ENCODE measurements at regions of chr16 and their contacts with region 1.

Region 1: DNA sequence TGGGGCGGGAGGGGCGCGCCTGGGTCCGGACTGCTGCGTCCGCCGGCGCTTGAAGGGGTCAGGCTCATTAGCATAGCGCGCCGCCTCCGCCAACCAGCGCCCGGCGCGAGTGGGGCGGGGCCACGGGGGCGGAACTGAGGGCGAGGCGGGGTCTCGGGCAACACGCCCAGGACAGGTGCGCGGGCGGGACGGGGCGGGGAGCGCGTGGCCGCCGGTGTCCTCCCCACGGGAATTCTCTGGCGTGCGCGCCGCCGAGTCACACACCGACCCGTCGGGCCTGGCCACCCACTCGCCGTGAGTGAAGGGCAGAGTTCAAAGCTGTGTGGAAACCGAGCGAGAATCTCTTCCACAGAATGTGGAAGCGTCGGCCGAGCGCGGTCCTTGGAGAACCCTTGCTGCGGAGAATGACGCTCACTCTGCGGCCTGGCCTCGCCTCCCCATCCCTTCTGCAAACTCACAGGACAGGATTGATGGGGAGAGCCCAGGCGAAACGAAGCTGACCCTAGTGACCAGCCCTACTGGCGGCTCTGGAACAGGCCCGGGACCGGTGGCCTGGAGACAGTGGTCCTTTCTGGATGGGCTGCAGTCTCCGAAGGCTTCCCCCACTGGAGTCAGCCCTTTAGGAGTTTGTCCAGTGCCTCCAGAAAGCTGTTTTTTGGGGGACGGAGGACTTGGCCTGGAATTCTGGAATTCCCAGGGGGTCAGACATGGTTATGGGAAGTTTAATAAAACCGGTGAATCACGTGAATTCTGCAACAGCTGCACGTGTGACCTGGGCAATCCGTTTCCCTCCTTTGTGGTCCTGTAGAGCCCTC is at the start of gene SNAI3:
- DNase-seq: peak; percentile 74 to 84 (median 78)
- H3K4me3 ChIP-seq: peak within 1 kb of the TSS; percentile 82 to 90
- H3K4me3 Mint-ChIP-seq: peak within 1 kb of the TSS; percentile 81 to 89 (median 84)
- H3K27ac ChIP-seq: peak within 1 kb of the TSS; percentile 68
- H3K27ac Mint-ChIP-seq: peak within 1 kb of the TSS; percentile 25 to 96 (median 79)
- H3K4me1 ChIP-seq: peaks cover 68% of the 10 kb centered on the region
- H3K4me1 Mint-ChIP-seq: peaks cover 26 to 67% (median 49%) of the 10 kb centered on the region in 4 donors
- H3K27me3 ChIP-seq: no peaks in the 10 kb centered on the region
- H3K27me3 Mint-ChIP-seq: no peaks in the 10 kb centered on the region
- total RNA-seq, gene SNAI3: 14.0 to 15.7 TPM

Region 2: GRCh38 chr16:88639231-88640038 is 47.2 kb before region 1 on chr16:
- CTCF ChIA-PET with region 1: interaction called, 3 read pairs
- POLR2A ChIA-PET with region 1: interaction called, 3 read pairs
- intact Hi-C with region 1: loop called (anchors 5 kb)
- DNase-seq: no peak
- H3K4me3 ChIP-seq: no peak overlapping the region
- H3K4me3 Mint-ChIP-seq: peak overlapping the region in 2 of 8 donors; percentile 58 to 63
- H3K27ac ChIP-seq: no peak overlapping the region
- H3K27ac Mint-ChIP-seq: peak overlapping the region in 2 of 7 donors; percentile 84 to 92
- H3K4me1 ChIP-seq: peaks cover 50% of the 10 kb centered on the region
- H3K4me1 Mint-ChIP-seq: peaks cover 15 to 48% (median 32%) of the 10 kb centered on the region in 4 donors
- H3K27me3 ChIP-seq: peaks cover 11% of the 10 kb centered on the region
- H3K27me3 Mint-ChIP-seq: peaks cover 0 to 9% of the 10 kb centered on the region in 2 donors

Region 3: DNA sequence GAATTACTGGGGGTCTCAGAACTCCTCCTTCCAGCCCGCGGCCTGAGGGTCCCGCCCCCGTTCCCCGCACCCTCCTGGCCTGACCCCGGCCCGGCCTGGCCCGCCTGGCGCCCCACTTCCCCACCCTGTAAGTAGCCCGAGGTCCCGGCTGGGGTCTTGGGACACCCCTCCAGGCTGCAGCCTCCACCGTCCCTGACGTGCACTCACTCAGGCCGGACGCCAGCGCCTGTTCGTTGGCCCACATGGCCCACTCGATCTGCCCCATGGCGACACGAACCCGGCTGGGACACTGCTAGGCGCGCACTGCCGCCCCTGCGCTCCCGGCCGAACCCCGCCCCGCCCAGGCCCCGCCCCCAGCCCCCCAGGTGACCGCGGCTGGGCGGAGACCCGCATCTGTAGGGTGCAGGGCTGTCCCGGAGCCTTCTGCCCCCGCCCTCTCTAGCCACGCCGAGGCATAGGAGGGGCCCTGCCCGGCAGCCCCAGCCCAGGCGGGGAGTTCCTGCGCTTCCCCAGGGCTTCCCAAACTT is 35.8 kb before region 1 on chr16 and contains the start of gene CYBA:
- CTCF ChIA-PET with region 1: interaction called, 3 read pairs
- POLR2A ChIA-PET with region 1: interaction called, 5 read pairs
- intact Hi-C with region 1: loop called (anchors 1 kb)
- DNase-seq: peak; percentile 81 to 87 (median 84)
- H3K4me3 ChIP-seq: peak within 1 kb of the TSS; percentile 76 to 91
- H3K4me3 Mint-ChIP-seq: peak within 1 kb of the TSS; percentile 89 to 93 (median 91)
- H3K27ac ChIP-seq: peak within 1 kb of the TSS; percentile 91
- H3K27ac Mint-ChIP-seq: peak within 1 kb of the TSS; percentile 93 to 97 (median 95)
- H3K4me1 ChIP-seq: peaks cover 28% of the 10 kb centered on the region
- H3K4me1 Mint-ChIP-seq: peaks cover 7 to 26% (median 12%) of the 10 kb centered on the region in 4 donors
- H3K27me3 ChIP-seq: no peaks in the 10 kb centered on the region
- H3K27me3 Mint-ChIP-seq: no peaks in the 10 kb centered on the region
- total RNA-seq, gene CYBA: 383 to 386 TPM

Region 4: GRCh38 chr16:88662843-88663606 is 23.6 kb before region 1 on chr16 and contains the start of gene MVD:
- CTCF ChIA-PET with region 1: interaction called, 4 read pairs
- POLR2A ChIA-PET with region 1: interaction called, 17 read pairs
- intact Hi-C with region 1: loop called (anchors 1 kb)
- DNase-seq: peak; percentile 93 to 96 (median 95)
- H3K4me3 ChIP-seq: peak within 1 kb of the TSS; percentile 65 to 95
- H3K4me3 Mint-ChIP-seq: peak within 1 kb of the TSS; percentile 91 to 95 (median 94)
- H3K27ac ChIP-seq: peak within 1 kb of the TSS; percentile 83
- H3K27ac Mint-ChIP-seq: peak within 1 kb of the TSS; percentile 80 to 98 (median 97)
- H3K4me1 ChIP-seq: peaks cover 16% of the 10 kb centered on the region
- H3K4me1 Mint-ChIP-seq: peaks cover 11 to 22% (median 15%) of the 10 kb centered on the region in 4 donors
- H3K27me3 ChIP-seq: no peaks in the 10 kb centered on the region
- H3K27me3 Mint-ChIP-seq: no peaks in the 10 kb centered on the region
- total RNA-seq, gene MVD: 49.2 to 57.0 TPM

Region 5: GRCh38 chr16:88672776-88673175 is 13.9 kb before region 1 on chr16:
- CTCF ChIA-PET with region 1: interaction called, 10 read pairs
- POLR2A ChIA-PET with region 1: interaction called, 11 read pairs
- intact Hi-C with region 1: no loop called
- DNase-seq: no peak
- H3K4me3 ChIP-seq: no peak overlapping the region
- H3K4me3 Mint-ChIP-seq: no peak overlapping the region
- H3K27ac ChIP-seq: no peak overlapping the region
- H3K27ac Mint-ChIP-seq: no peak overlapping the region
- H3K4me1 ChIP-seq: no peaks in the 10 kb centered on the region
- H3K4me1 Mint-ChIP-seq: no peaks in the 10 kb centered on the region
- H3K27me3 ChIP-seq: no peaks in the 10 kb centered on the region
- H3K27me3 Mint-ChIP-seq: no peaks in the 10 kb centered on the region

Region 6: DNA sequence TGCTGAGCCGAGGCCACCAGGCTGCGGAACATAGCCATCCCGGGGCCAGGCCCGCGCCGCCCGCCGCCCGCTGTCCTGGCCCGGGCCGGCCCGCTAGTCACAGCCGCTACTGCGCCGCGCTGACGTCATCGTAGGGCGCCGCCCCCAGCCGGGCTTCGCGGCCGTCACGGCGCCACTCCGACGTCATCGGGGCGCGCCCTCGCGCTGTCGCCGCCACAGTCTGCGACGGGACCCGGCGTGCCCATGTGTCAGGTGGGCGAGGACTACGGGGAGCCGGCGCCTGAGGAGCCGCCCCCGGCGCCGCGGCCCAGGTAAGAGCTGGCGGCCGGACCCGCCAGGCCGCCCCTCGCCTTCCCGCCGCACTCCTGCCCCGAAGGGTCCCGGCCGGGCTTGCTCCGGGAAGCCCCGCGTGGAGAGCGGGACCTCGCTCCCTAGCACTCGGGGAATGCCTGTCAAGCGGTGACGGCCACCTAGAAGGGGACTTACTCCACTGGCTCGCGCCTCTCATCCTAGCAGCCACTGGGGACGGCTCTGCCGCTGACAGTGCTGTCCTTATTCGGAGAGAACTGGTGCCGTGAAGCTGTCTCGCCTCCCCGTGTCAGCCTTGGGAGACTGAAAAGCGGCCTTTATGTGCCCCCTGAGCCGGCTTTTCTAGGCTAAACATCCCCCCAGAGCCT is 19.8 kb after region 1 on chr16 and contains the starts of genes CTU2 and RNF166:
- CTCF ChIA-PET with region 1: interaction called, 21 read pairs
- POLR2A ChIA-PET with region 1: interaction called, 249 read pairs
- intact Hi-C with region 1: loop called (anchors 1 kb)
- DNase-seq: peak; percentile 90 to 94 (median 91)
- H3K4me3 ChIP-seq: peak within 1 kb of the TSS; percentile 95 to 98
- H3K4me3 Mint-ChIP-seq: peak within 1 kb of the TSS; percentile 93 to 96 (median 96)
- H3K27ac ChIP-seq: peak within 1 kb of the TSS; percentile 85
- H3K27ac Mint-ChIP-seq: peak within 1 kb of the TSS; percentile 97 to 99 (median 98)
- H3K4me1 ChIP-seq: peaks cover 50% of the 10 kb centered on the region
- H3K4me1 Mint-ChIP-seq: peaks cover 20 to 62% (median 39%) of the 10 kb centered on the region in 4 donors
- H3K27me3 ChIP-seq: no peaks in the 10 kb centered on the region
- H3K27me3 Mint-ChIP-seq: no peaks in the 10 kb centered on the region
- total RNA-seq, gene CTU2: 20.4 to 21.1 TPM
- total RNA-seq, gene RNF166: 129 to 137 TPM

Region 7: GRCh38 chr16:88719267-88719932 is 32.8 kb after region 1 on chr16:
- CTCF ChIA-PET with region 1: no interaction called
- POLR2A ChIA-PET with region 1: no interaction called
- intact Hi-C with region 1: no loop called
- DNase-seq: no peak
- H3K4me3 ChIP-seq: no peak overlapping the region
- H3K4me3 Mint-ChIP-seq: no peak overlapping the region
- H3K27ac ChIP-seq: no peak overlapping the region
- H3K27ac Mint-ChIP-seq: peak overlapping the region in 1 of 7 donors; percentile 55
- H3K4me1 ChIP-seq: no peaks in the 10 kb centered on the region
- H3K4me1 Mint-ChIP-seq: peaks cover 0 to 4% (median 0%) of the 10 kb centered on the region in 4 donors
- H3K27me3 ChIP-seq: no peaks in the 10 kb centered on the region
- H3K27me3 Mint-ChIP-seq: no peaks in the 10 kb centered on the region

Region 8: DNA sequence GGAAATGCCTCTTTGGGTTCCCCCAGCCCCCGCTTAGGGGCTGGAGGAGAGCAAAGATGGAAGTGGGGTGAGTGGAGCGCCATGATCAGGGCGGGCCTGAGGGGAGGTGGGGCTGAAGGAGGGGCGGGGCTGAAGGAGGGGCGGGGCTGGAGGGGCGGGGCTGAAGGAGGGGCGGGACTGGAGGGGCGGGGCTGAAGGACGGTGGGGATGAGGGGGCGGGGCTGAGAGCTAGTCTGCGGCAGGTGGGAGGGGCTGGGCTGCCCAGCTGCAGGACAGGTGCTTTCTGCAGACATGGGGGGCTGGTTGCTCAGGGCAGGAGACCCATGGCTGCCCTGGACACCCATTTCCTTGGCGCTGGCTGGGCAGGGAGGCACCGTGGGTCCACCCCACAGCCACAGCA is 218.9 kb after region 1 on chr16:
- CTCF ChIA-PET with region 1: no interaction called
- POLR2A ChIA-PET with region 1: no interaction called
- intact Hi-C with region 1: no loop called
- DNase-seq: no peak
- H3K4me3 ChIP-seq: no peak overlapping the region
- H3K4me3 Mint-ChIP-seq: no peak overlapping the region
- H3K27ac ChIP-seq: no peak overlapping the region
- H3K27ac Mint-ChIP-seq: no peak overlapping the region
- H3K4me1 ChIP-seq: no peaks in the 10 kb centered on the region
- H3K4me1 Mint-ChIP-seq: no peaks in the 10 kb centered on the region
- H3K27me3 ChIP-seq: no peaks in the 10 kb centered on the region
- H3K27me3 Mint-ChIP-seq: no peaks in the 10 kb centered on the region

Measured in CD4-positive, alpha-beta memory T cell (primary cell).